ENCODE measurements at regions of chr11 and their contacts with region 1.

Region 1: DNA sequence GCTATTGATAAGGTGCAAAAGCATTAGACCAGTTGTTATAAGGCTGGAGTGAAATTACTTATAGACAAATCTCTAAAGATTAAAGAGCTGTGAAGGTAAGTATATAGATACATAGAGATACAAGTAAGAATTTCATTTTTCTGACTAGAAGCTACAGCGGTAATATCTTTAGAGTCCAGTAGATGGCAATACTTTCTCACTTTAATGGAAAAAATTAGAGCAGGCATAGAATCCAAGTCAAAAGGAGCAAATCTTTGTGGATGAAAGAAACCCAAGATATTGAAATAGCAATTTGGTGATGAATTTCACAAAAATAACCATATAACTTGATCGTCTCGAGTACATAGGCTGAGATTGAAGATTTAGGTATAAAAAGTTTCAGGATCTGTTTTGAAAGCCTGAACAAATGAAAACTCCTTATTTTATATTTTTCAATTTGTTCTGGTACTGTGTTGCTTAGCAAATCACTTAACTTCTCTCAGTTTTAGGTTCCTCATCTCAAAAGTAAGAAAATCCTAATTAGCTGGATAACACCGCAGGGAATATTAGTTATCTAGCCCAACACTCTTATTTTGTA is 81.9 kb downstream of the UVRAG start:
- DNase-seq: no peak
- H3K4me3 ChIP-seq: no peak overlapping the region
- H3K27ac ChIP-seq: no peak overlapping the region
- H3K4me1 ChIP-seq: peaks cover 2% of the 10 kb centered on the region
- H3K27me3 ChIP-seq: no peaks in the 10 kb centered on the region
- CTCF ChIP-seq: peak; percentile 47 to 69 (median 52)
- EP300 ChIP-seq: no peak
- POLR2A ChIP-seq: no peak

Region 2: GRCh38 chr11:76152086-76152681 is 255.3 kb after region 1 on chr11:
- intact Hi-C with region 1: loop called (anchors 2 to 5 kb)
- DNase-seq: peak; percentile 80 to 89 (median 87)
- H3K4me3 ChIP-seq: peak overlapping the region; percentile 43
- H3K27ac ChIP-seq: no peak overlapping the region
- H3K4me1 ChIP-seq: peaks cover 2% of the 10 kb centered on the region
- H3K27me3 ChIP-seq: no peaks in the 10 kb centered on the region
- CTCF ChIP-seq: peak; percentile 84 to 94 (median 91)
- EP300 ChIP-seq: no peak
- POLR2A ChIP-seq: no peak

Region 3: DNA sequence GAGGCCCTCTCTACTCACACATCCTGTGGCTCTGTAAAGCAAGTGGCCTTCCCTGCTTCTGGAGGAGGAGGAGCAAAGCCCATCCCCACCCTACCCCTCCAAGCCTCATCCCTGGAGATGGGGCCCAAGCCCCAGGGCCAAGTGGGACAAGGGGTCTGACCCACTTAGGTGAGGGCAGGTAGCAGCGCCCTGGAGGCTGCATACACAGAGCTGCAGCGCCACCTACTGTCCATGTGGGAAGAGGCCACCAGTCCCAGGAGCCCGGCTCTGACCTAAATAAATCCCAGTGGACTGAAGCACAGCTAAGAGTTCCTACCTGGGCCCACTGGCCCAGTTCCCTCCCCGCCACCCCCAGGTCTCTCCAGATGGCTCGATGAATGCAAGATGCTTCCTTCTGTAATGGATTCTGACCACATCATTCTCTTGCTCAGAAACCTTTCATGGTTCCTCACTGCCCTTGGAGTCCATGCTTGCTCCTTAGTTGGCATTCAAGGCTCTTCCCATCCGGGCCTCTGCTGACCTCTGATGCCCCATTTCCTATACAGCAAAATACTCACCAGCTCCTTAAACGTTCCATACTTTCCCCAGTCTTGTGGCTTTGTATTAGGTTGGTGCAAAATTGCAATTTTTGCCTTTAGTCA is 421.9 kb after region 1 on chr11:
- intact Hi-C with region 1: loop called (anchors 5 to 10 kb)
- DNase-seq: peak; percentile 72 to 85 (median 79)
- H3K4me3 ChIP-seq: no peak overlapping the region
- H3K27ac ChIP-seq: no peak overlapping the region
- H3K4me1 ChIP-seq: peaks cover 1% of the 10 kb centered on the region
- H3K27me3 ChIP-seq: no peaks in the 10 kb centered on the region
- CTCF ChIP-seq: peak; percentile 79 to 86 (median 85)
- EP300 ChIP-seq: no peak
- POLR2A ChIP-seq: no peak

Region 4: DNA sequence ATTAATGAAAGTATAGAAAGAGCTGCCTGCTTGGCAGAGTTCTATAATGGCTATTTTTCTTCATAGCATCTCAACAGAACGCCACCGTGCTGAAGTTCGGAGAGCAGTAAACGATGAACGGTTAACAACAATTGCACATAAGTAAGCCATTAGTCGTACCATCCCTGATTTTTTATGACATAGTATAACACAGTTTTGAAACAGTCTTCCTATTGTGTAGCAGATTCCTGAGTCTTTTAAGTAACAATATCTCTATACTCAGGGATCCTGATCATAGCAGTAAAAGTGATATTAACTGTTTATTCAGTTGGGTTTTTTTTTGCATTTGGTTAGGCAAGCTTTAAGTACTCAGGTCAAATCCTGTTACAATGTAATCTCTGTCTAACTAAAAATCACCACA is 556.3 kb after region 1 on chr11:
- intact Hi-C with region 1: loop called in 1 of 4 experiments (anchors 5 kb)
- DNase-seq: no peak
- H3K4me3 ChIP-seq: no peak overlapping the region
- H3K27ac ChIP-seq: no peak overlapping the region
- H3K4me1 ChIP-seq: peaks cover 2% of the 10 kb centered on the region
- H3K27me3 ChIP-seq: no peaks in the 10 kb centered on the region
- CTCF ChIP-seq: no peak
- EP300 ChIP-seq: no peak
- POLR2A ChIP-seq: no peak

Measured in ovary (tissue), 10 donors.